H1 (cell line): ENCODE measurements at regions of chr10 and their contacts with region 1.

Region 1: DNA sequence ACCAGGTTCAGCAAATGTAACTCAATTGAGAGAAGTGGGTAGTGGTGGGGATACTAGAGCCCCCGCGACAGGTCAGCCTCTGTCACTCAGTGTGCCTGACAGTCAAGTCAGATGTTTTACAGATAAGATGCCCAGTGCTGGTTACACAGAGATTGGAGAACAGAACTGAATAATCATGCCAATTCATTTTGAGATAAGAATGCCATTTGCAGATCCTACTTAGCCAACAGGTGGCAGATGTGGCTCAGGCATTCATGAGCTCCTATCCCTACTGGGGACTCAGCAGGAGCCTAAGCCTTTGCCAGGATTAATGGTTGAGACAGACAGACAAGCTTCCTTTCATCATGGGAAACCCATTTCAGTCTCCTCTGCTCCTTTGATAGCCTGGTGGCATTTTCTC is 137.8 kb downstream of the MAPK8 start:
- DNase-seq: peak in 1 of 2 experiments; percentile 48
- H3K4me3 ChIP-seq: no peak overlapping the region
- H3K27ac ChIP-seq: no peak overlapping the region
- H3K4me1 ChIP-seq: peaks cover 3 to 10% (median 8%) of the 10 kb centered on the region in 4 experiments; a peak in 5 of 7 replicates
- H3K27me3 ChIP-seq: no peaks in the 10 kb centered on the region
- CTCF ChIP-seq: peak in 2 of 3 experiments; percentile 64 to 71; a peak in 3 of 4 replicates
- EP300 ChIP-seq: no peak
- POLR2A ChIP-seq: no peak
- RAD21 ChIP-seq: peak; percentile 78 to 84

Region 2: GRCh38 chr10:48390933-48391845 is 53.1 kb before region 1 on chr10:
- CTCF ChIA-PET with region 1: no interaction called
- POLR2A ChIA-PET with region 1: no interaction called
- DNase-seq: no peak
- H3K4me3 ChIP-seq: no peak overlapping the region
- H3K27ac ChIP-seq: no peak overlapping the region
- H3K4me1 ChIP-seq: peaks cover 0 to 5% (median 1%) of the 10 kb centered on the region in 4 experiments; a peak in 1 of 7 replicates
- H3K27me3 ChIP-seq: no peaks in the 10 kb centered on the region
- CTCF ChIP-seq: no peak
- EP300 ChIP-seq: no peak
- POLR2A ChIP-seq: no peak
- RAD21 ChIP-seq: no peak

Region 3: GRCh38 chr10:48456361-48456804 is 12.1 kb after region 1 on chr10:
- CTCF ChIA-PET with region 1: interaction called, 112 read pairs
- POLR2A ChIA-PET with region 1: interaction called, 5 read pairs
- DNase-seq: peak in 1 of 2 experiments; percentile 46
- H3K4me3 ChIP-seq: no peak overlapping the region
- H3K27ac ChIP-seq: no peak overlapping the region
- H3K4me1 ChIP-seq: peaks cover 0 to 5% (median 2%) of the 10 kb centered on the region in 4 experiments; a peak in 4 of 7 replicates
- H3K27me3 ChIP-seq: no peaks in the 10 kb centered on the region
- CTCF ChIP-seq: no peak
- EP300 ChIP-seq: no peak
- POLR2A ChIP-seq: no peak
- RAD21 ChIP-seq: no peak

Region 4: DNA sequence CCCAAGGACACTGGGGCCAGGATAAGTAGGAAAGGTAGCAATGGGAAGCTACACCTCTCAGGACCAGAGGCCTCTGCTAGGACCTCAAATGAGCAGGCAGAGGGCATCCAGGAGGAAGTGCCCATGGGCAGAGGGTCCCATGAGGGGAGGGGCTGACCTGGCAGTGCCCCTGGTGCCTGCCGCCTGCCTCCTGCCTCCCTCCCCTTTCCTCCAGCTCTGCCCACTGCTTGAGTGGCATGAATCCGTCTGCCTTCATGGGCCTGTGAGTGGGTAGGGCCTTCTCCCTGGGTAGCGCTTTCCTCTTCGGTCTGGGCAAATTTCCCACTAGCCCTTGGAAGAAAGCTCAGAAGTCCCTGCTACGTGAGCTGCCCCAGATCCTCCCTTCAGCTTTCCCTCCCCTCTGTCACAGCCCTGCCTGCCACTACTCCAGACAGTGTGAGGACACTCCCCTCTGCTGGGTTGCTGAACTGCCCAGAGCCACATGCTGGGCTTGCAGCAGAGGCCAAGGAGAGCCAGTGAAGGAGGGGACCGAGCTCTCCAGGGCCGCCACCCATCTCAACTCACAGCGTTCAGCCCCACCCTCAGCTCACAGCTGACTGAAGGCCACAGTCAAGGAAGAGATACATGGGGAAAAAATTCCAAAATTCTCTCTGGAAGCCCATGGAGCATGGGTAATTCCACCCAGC is 19.2 kb after region 1 on chr10:
- CTCF ChIA-PET with region 1: interaction called, 112 read pairs
- POLR2A ChIA-PET with region 1: interaction called, 3 read pairs
- DNase-seq: peak in 1 of 2 experiments; percentile 38
- H3K4me3 ChIP-seq: no peak overlapping the region
- H3K27ac ChIP-seq: no peak overlapping the region
- H3K4me1 ChIP-seq: peaks cover 0 to 20% (median 10%) of the 10 kb centered on the region in 4 experiments; a peak in 3 of 7 replicates
- H3K27me3 ChIP-seq: peaks cover 0 to 12% (median 8%) of the 10 kb centered on the region in 4 experiments; a peak in 4 of 7 replicates
- CTCF ChIP-seq: no peak
- EP300 ChIP-seq: no peak
- POLR2A ChIP-seq: no peak
- RAD21 ChIP-seq: 0 out of 4 replicates have a peak, but pooled peaks of 1 of the 2 experiments have one; percentile 14

Region 5: DNA sequence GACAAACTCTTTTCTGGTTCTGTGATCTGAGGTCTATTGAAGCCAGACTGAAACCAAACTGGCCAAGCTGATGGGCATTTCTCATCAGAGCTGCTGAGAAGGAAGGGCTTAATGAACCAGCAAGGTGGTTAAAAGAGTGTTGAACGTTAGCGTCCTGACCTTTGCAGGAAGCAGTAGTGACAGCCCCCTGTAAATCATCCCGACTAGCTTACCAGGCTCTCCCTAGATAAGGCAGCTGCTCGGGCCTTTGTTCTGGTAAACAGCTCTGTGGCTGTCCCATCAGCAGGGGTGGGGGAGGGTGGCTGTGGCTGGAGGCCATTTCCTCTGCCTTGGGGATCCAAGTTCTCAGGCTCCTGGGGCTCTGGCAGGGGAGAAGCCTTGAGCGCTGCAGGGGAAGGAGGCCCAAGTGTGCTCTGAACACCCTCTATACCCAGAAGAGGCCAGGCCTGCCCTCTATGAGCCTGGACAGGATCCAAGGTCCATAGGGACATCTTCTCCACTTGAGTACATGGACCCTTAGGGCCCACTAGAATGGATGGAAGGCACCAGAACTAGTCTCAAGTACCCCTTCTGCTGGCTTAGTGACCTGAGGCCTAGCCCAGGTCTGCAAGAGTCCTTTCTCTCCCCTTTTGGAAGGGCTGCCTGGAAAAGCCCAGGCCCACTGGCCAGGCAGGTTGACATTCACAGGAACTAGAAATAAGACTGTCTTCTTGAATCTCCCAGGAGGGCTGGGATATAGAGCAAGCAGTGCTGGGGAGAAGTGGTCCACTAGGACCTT is 26.0 kb after region 1 on chr10:
- CTCF ChIA-PET with region 1: interaction called, 112 read pairs
- POLR2A ChIA-PET with region 1: no interaction called
- DNase-seq: peak in 1 of 2 experiments; percentile 48
- H3K4me3 ChIP-seq: no peak overlapping the region
- H3K27ac ChIP-seq: no peak overlapping the region
- H3K4me1 ChIP-seq: peaks cover 3 to 22% (median 15%) of the 10 kb centered on the region in 4 experiments; a peak in 6 of 7 replicates
- H3K27me3 ChIP-seq: peaks cover 0 to 12% (median 8%) of the 10 kb centered on the region in 4 experiments; a peak in 4 of 7 replicates
- CTCF ChIP-seq: no peak
- EP300 ChIP-seq: no peak
- POLR2A ChIP-seq: no peak
- RAD21 ChIP-seq: no peak

Region 6: GRCh38 chr10:48493083-48493871 is 49.0 kb after region 1 on chr10:
- CTCF ChIA-PET with region 1: interaction called, 12 read pairs
- POLR2A ChIA-PET with region 1: no interaction called
- DNase-seq: peak in 1 of 2 experiments; percentile 42
- H3K4me3 ChIP-seq: no peak overlapping the region
- H3K27ac ChIP-seq: no peak overlapping the region
- H3K4me1 ChIP-seq: no peaks in the 10 kb centered on the region; a peak in 1 of 7 replicates
- H3K27me3 ChIP-seq: no peaks in the 10 kb centered on the region
- CTCF ChIP-seq: no peak
- EP300 ChIP-seq: no peak
- POLR2A ChIP-seq: no peak
- RAD21 ChIP-seq: no peak

Region 7: GRCh38 chr10:48506147-48506917 is 62.1 kb after region 1 on chr10:
- CTCF ChIA-PET with region 1: interaction called, 141 read pairs
- POLR2A ChIA-PET with region 1: interaction called, 3 read pairs
- DNase-seq: peak in 1 of 2 experiments; percentile 31
- H3K4me3 ChIP-seq: no peak overlapping the region
- H3K27ac ChIP-seq: no peak overlapping the region
- H3K4me1 ChIP-seq: peaks cover 2 to 5% (median 3%) of the 10 kb centered on the region in 4 experiments; a peak in 4 of 7 replicates
- H3K27me3 ChIP-seq: no peaks in the 10 kb centered on the region
- CTCF ChIP-seq: peak; percentile 6 to 22 (median 19); a peak in 3 of 4 replicates
- EP300 ChIP-seq: no peak
- POLR2A ChIP-seq: no peak
- RAD21 ChIP-seq: peak; percentile 31 to 32